Calu3 (cell line): ENCODE measurements at regions of chr7 and their contacts with region 1.

Region 1: DNA sequence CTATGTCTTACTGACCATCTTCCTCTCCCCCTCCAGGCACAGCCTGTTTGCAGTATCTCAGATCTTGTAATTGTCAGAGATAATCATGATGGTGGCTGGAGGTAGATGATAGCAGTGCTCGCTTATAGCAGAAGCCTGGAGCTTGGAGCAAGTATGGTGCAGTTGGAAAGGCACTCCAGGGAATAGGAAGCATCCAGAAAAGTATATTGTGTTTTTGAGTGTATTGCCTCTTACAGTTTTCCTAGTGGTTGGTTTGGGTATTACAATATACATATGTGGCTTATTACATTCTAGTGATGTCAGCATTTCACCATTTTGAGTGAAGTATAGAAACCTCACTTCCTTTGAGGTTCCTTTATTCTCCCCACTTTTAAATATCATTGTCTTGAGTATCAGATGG is 101.5 kb downstream of the STK31 start:
- DNase-seq: no peak
- H3K4me3 Mint-ChIP-seq: no peak overlapping the region
- H3K27ac Mint-ChIP-seq: no peak overlapping the region
- H3K4me1 Mint-ChIP-seq: no peaks in the 10 kb centered on the region
- H3K27me3 Mint-ChIP-seq: peaks cover 8% of the 10 kb centered on the region
- CTCF ChIP-seq: peak; percentile 78

Region 2: GRCh38 chr7:23454881-23455506 is 356.5 kb before region 1 on chr7:
- CTCF ChIA-PET with region 1: no interaction called
- intact Hi-C with region 1: no loop called
- DNase-seq: no peak
- H3K4me3 Mint-ChIP-seq: no peak overlapping the region
- H3K27ac Mint-ChIP-seq: no peak overlapping the region
- H3K4me1 Mint-ChIP-seq: peaks cover 51% of the 10 kb centered on the region
- H3K27me3 Mint-ChIP-seq: no peaks in the 10 kb centered on the region
- CTCF ChIP-seq: no peak

Region 3: GRCh38 chr7:23767514-23767913 is 44.0 kb before region 1 on chr7:
- CTCF ChIA-PET with region 1: no interaction called
- intact Hi-C with region 1: loop called (anchors 1 kb)
- DNase-seq: no peak
- H3K4me3 Mint-ChIP-seq: no peak overlapping the region
- H3K27ac Mint-ChIP-seq: no peak overlapping the region
- H3K4me1 Mint-ChIP-seq: peaks cover 8% of the 10 kb centered on the region
- H3K27me3 Mint-ChIP-seq: no peaks in the 10 kb centered on the region
- CTCF ChIP-seq: no peak

Region 4: GRCh38 chr7:23833405-23833804 is 21.9 kb after region 1 on chr7:
- CTCF ChIA-PET with region 1: interaction called, 10 read pairs
- intact Hi-C with region 1: no loop called
- DNase-seq: no peak
- H3K4me3 Mint-ChIP-seq: no peak overlapping the region
- H3K27ac Mint-ChIP-seq: no peak overlapping the region
- H3K4me1 Mint-ChIP-seq: no peaks in the 10 kb centered on the region
- H3K27me3 Mint-ChIP-seq: peaks cover 8% of the 10 kb centered on the region
- CTCF ChIP-seq: no peak

Region 5: GRCh38 chr7:23981320-23981719 is 169.8 kb after region 1 on chr7:
- CTCF ChIA-PET with region 1: no interaction called
- intact Hi-C with region 1: no loop called
- DNase-seq: no peak
- H3K4me3 Mint-ChIP-seq: no peak overlapping the region
- H3K27ac Mint-ChIP-seq: no peak overlapping the region
- H3K4me1 Mint-ChIP-seq: no peaks in the 10 kb centered on the region
- H3K27me3 Mint-ChIP-seq: peaks cover 32% of the 10 kb centered on the region
- CTCF ChIP-seq: no peak